PC-9 (cell line): ENCODE measurements at regions of chr14 and their contacts with region 1.

Region 1: DNA sequence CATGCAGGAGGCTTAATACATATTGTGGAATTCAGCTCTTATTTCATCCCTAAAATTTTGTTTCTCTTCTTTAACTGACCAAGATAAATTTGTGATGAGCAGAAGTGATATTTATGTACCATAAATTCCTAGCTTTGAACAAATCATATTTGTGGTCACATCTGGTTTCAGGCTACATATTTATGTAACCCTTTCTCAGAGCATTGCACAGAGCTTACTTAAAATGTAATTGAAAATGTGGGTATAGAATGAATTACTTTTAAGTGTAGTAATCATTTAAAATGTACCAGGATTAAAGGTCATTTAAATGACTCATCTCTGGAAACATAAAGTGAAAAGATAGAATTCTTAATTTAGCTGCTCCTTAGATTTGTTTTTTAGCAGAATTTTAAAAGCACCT is 129.9 kb upstream of the FRMD6 start:
- DNase-seq: no peak
- H3K4me3 ChIP-seq: no peak overlapping the region
- H3K27ac ChIP-seq: no peak overlapping the region
- H3K4me1 ChIP-seq: peaks cover 17% of the 10 kb centered on the region
- H3K27me3 ChIP-seq: no peaks in the 10 kb centered on the region
- CTCF ChIP-seq: no peak

Region 2: DNA sequence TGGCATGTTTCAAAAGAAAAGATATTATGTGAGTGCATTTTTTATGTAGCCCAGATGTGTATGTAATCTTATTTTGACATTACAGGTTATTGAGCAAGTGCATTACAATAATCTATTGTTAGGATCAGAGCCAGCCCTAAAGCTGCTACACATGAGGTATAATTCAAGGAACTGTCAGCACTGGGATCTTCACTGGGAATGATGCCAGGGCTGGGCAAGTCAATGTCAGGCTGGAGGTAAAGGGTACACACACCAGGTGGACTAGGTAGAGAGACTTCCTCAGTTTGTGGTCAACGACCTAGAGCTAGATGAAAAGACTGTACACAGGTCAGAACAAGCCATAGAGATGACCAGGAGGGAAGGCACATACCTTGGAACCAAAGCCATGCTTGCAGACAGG is 442.3 kb before region 1 on chr14:
- CTCF ChIA-PET with region 1: interaction called, 10 read pairs
- POLR2A ChIA-PET with region 1: no interaction called
- intact Hi-C with region 1: no loop called
- DNase-seq: peak in 1 of 2 experiments; percentile 57
- H3K4me3 ChIP-seq: no peak overlapping the region
- H3K27ac ChIP-seq: peak overlapping the region; percentile 25
- H3K4me1 ChIP-seq: peaks cover 25% of the 10 kb centered on the region
- H3K27me3 ChIP-seq: no peaks in the 10 kb centered on the region
- CTCF ChIP-seq: no peak

Region 3: GRCh38 chr14:51463461-51463860 is 58.3 kb before region 1 on chr14:
- CTCF ChIA-PET with region 1: no interaction called
- POLR2A ChIA-PET with region 1: no interaction called
- intact Hi-C with region 1: no loop called
- DNase-seq: no peak
- H3K4me3 ChIP-seq: no peak overlapping the region
- H3K27ac ChIP-seq: no peak overlapping the region
- H3K4me1 ChIP-seq: peaks cover 6% of the 10 kb centered on the region; the same call in 1 of the 2 replicates
- H3K27me3 ChIP-seq: no peaks in the 10 kb centered on the region
- CTCF ChIP-seq: no peak

Region 4: GRCh38 chr14:51539571-51540037 is 17.8 kb after region 1 on chr14:
- CTCF ChIA-PET with region 1: no interaction called
- POLR2A ChIA-PET with region 1: no interaction called
- intact Hi-C with region 1: no loop called
- DNase-seq: peak; percentile 69 to 84
- H3K4me3 ChIP-seq: 0 out of 2 replicates have a peak overlapping the region, but pooled peaks have one; percentile 5
- H3K27ac ChIP-seq: peak overlapping the region; percentile 85
- H3K4me1 ChIP-seq: peaks cover 34% of the 10 kb centered on the region
- H3K27me3 ChIP-seq: no peaks in the 10 kb centered on the region
- CTCF ChIP-seq: no peak